ENCODE measurements at regions of chr5 and their contacts with region 1.

Region 1: GRCh38 chr5:776792-777711 is 7.5 kb downstream of the ZDHHC11B start:
- DNase-seq: no peak
- ATAC-seq: no peak
- H3K4me3 ChIP-seq: no peak overlapping the region
- H3K27ac ChIP-seq: peak overlapping the region in 1 of 10 donors; percentile 42
- H3K4me1 ChIP-seq: peaks cover 0 to 30% (median 7%) of the 10 kb centered on the region in 9 donors
- H3K27me3 ChIP-seq: no peaks in the 10 kb centered on the region
- CTCF ChIP-seq: no peak

Region 2: DNA sequence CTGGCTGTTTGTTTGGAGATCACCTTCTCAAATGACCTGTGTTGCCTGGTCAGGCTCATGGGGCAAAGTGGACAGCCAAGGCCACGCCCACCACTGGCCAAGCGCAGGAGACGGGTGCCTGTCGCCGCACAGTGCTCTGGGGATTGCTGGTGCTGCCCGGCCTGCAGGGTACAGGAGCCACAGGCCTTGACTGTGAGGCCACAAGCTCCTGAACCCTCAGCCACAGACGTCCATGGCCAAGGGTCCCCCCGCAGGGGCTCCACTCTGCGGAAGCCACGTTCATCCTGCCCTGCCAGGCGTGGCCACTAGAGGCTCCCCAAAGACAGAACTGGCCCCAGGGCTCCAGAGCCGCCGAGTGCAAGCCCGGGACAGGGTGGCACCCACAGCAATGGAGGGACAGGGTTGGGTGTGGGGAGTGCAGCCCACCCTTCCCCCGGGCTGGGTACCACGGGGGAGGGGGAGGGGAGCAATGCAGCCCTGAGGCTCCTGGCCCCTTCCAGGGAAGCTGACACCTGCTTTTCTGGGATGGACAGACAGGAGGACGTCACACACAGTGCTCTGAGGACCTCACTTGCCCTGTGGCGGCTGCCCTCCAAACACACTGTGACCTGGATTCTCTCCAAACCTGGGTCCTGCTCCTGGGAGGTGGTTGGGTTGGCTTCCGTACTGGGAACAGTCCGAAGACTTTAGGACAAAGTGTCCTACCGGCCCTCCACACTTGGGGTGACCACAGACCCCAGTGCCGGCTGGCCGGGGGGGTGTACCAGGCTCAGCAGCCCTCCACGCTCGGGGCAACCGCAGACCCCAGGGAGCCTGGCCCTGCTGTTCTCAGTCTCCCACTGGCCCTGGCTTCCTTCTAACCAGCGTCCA is 105.4 kb before region 1 on chr5:
- intact Hi-C with region 1: loop called in 1 of 10 experiments (anchors 10 kb)
- DNase-seq: peak; percentile 75 to 79
- ATAC-seq: peak; percentile 71 to 88 (median 80)
- H3K4me3 ChIP-seq: peak overlapping the region in 4 of 10 donors; percentile 8 to 40 (median 28)
- H3K27ac ChIP-seq: peak overlapping the region in 6 of 10 donors; percentile 29 to 76 (median 56)
- H3K4me1 ChIP-seq: peaks cover 25 to 45% (median 37%) of the 10 kb centered on the region in 9 donors
- H3K27me3 ChIP-seq: peaks cover 0 to 25% (median 0%) of the 10 kb centered on the region in 7 donors
- CTCF ChIP-seq: peak; percentile 88 to 98 (median 95)

Region 3: GRCh38 chr5:683551-684481 is 93.2 kb before region 1 on chr5:
- intact Hi-C with region 1: loop called in 7 of 10 experiments (anchors 2 to 10 kb)
- DNase-seq: no peak
- ATAC-seq: peak in 5 of 8 donors; percentile 23 to 83 (median 75)
- H3K4me3 ChIP-seq: no peak overlapping the region
- H3K27ac ChIP-seq: peak overlapping the region in 1 of 10 donors; percentile 40
- H3K4me1 ChIP-seq: peaks cover 0 to 18% (median 0%) of the 10 kb centered on the region in 9 donors
- H3K27me3 ChIP-seq: no peaks in the 10 kb centered on the region
- CTCF ChIP-seq: no peak

Region 4: GRCh38 chr5:691817-692528 is 85.1 kb before region 1 on chr5:
- intact Hi-C with region 1: loop called in 2 of 10 experiments (anchors 10 kb)
- DNase-seq: no peak
- ATAC-seq: no peak
- H3K4me3 ChIP-seq: peak overlapping the region; percentile 41 to 66 (median 60)
- H3K27ac ChIP-seq: no peak overlapping the region
- H3K4me1 ChIP-seq: peaks cover 0 to 6% (median 0%) of the 10 kb centered on the region in 9 donors
- H3K27me3 ChIP-seq: peaks cover 0 to 8% (median 0%) of the 10 kb centered on the region in 7 donors
- CTCF ChIP-seq: no peak

Measured in heart right ventricle (tissue), 16 donors.